ENCODE measurements at regions of chr21 and their contacts with region 1.

Region 1: DNA sequence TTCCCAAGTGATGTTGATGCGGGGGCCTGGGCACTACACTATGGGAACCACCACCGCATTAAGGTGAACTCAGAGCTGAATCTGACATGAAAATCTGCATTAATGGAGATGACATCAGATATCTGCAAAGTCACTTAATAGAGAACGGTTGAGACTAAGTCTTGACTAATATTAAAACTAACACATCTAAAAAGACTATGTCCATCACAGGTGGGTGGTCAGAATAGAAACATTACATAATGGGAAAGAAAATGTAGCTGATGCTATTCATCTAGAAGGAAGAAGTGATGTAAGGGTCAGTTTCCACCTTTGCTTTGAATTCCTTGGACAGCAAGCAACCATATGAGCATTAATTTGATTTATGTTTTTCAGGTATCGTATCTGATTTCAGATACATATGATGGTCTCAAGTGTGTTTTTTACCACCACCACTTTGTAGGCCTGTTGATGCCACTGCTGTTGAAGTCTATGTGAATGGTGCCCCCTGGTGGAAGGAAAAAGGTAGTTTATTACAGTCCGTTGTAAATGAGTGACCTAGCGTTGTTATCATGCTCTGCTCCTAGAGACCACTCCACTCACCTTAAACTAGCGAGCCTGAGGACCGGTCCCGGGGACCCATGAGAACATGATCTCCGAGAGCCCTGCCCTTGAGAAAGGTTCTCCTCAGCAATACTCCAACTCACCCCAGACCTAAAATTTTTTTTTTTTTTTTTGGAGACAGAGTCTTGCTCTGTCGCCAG is 73.5 kb downstream of the BACH1 start:
- DNase-seq: peak; percentile 36
- H3K4me3 Mint-ChIP-seq: no peak overlapping the region
- H3K27ac Mint-ChIP-seq: peak overlapping the region; percentile 44
- H3K4me1 Mint-ChIP-seq: peaks cover 25% of the 10 kb centered on the region
- H3K27me3 Mint-ChIP-seq: no peaks in the 10 kb centered on the region

Region 2: GRCh38 chr21:29078869-29079767 is 293.1 kb before region 1 on chr21:
- intact Hi-C with region 1: loop called (anchors 2 kb)
- DNase-seq: no peak
- H3K4me3 Mint-ChIP-seq: peak overlapping the region; percentile 34
- H3K27ac Mint-ChIP-seq: peak overlapping the region; percentile 83
- H3K4me1 Mint-ChIP-seq: peaks cover 45% of the 10 kb centered on the region
- H3K27me3 Mint-ChIP-seq: no peaks in the 10 kb centered on the region

Region 3: DNA sequence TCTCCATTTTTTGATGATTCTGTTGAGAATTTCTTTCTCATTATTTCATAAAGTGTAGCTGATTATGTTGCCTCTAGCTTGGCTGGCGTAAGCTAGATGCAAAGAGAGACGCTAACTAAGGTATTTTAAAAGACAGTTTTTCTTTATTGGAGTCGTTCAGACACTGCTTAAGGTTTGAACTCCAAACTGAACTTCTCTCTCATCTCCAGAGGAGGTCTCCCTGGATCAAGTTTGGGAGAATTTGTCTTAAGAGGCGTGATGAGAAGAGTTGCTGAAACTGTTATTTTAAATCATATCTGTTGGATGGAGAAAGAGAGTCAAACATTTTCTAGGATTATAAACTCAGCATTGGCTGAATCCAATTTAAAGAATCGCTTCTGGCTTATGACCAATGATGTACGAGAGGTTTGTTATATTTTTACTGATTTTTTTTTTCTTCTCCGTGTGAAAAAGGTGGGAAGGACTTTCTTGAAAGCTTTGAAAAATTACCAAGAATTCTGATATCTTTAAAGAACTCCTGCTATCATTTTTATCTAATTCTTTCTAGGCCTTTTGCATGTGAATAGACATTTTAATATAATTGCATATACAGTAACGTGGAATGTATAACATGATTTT is 207.8 kb before region 1 on chr21:
- intact Hi-C with region 1: loop called (anchors 1 kb)
- DNase-seq: no peak
- H3K4me3 Mint-ChIP-seq: no peak overlapping the region
- H3K27ac Mint-ChIP-seq: no peak overlapping the region
- H3K4me1 Mint-ChIP-seq: peaks cover 3% of the 10 kb centered on the region
- H3K27me3 Mint-ChIP-seq: peaks cover 7% of the 10 kb centered on the region

Region 4: DNA sequence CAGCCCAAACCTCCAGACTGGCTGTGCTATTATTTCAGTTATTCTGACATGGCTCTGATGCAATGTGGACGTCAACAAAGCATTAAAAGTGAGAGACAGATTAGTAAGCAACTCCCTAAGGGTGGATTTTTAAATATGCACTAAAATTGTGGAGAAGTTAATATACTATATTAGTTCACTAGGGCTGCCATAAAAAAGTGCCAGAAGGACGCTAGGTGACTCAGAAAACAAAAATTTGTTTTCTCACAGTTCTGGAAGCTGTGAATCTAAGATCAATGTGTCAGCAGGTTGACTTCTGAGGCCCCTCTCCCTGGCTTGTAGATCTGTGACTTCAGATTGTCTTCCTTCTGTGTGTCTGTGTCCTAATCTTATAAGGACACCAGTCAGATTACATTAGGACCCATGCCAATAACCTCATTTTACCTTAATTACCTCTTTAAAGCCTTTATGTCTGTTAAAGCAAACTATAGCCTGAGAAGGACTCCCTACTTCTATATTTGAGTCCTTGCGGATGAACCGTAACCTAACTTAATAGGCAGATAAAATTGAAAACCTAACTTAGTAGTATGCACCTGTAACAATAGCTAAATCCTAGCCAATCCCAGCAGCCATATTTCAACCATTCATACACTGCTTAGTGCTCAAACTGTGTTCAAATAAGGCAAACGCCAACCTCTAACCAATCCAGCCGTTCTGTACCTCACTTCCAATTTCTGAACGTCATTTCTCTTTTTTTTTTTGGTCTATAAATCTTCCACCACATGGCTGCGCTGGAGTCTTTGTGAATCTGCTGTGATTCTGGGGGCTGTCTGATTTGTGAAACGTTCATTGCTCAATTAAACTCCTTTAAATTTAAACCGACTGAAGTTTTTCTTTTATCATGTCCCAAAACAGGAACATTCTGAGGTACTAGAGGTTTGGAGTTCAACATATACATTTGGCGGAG is 139.4 kb before region 1 on chr21:
- intact Hi-C with region 1: loop called (anchors 1 kb)
- DNase-seq: no peak
- H3K4me3 Mint-ChIP-seq: no peak overlapping the region
- H3K27ac Mint-ChIP-seq: no peak overlapping the region
- H3K4me1 Mint-ChIP-seq: peaks cover 37% of the 10 kb centered on the region
- H3K27me3 Mint-ChIP-seq: peaks cover 56% of the 10 kb centered on the region

Region 5: DNA sequence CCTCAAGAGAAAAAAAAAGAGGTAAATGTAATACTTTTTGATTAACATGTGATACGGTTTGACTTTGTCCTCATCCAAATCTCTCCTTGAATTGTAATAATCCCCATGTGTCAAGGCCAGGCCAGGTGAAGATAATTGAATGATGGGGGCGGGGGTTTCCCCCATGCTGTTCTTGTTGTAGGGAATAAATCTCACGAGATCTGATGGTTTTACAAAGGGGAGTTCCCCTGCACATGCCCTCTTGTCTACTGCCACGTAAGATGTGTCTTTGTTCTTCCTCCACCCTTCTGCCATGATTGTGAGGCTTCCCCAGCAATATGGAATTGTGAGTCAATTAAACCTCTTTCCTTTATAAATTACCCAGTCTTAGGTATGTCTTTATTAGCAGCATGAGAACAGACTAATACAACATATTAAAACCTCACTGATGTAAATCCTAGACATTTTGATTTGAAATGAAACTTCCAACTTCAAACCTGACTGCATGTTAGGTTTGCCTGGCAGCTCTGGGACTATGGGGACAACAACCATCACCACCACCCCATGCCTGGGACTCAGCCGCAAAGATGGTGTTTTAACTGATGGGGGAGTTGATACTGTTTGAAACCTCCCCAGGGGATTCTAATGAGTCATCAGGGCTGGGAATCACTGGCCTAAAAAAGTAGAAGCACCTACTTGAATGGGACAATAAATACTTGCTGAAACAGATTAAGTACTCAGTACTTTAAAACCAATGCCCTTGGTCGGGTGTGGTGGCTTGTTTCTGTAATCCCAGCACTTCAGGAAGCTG is 106.3 kb before region 1 on chr21:
- intact Hi-C with region 1: no loop called
- DNase-seq: no peak
- H3K4me3 Mint-ChIP-seq: no peak overlapping the region
- H3K27ac Mint-ChIP-seq: no peak overlapping the region
- H3K4me1 Mint-ChIP-seq: peaks cover 5% of the 10 kb centered on the region
- H3K27me3 Mint-ChIP-seq: peaks cover 22% of the 10 kb centered on the region

Region 6: DNA sequence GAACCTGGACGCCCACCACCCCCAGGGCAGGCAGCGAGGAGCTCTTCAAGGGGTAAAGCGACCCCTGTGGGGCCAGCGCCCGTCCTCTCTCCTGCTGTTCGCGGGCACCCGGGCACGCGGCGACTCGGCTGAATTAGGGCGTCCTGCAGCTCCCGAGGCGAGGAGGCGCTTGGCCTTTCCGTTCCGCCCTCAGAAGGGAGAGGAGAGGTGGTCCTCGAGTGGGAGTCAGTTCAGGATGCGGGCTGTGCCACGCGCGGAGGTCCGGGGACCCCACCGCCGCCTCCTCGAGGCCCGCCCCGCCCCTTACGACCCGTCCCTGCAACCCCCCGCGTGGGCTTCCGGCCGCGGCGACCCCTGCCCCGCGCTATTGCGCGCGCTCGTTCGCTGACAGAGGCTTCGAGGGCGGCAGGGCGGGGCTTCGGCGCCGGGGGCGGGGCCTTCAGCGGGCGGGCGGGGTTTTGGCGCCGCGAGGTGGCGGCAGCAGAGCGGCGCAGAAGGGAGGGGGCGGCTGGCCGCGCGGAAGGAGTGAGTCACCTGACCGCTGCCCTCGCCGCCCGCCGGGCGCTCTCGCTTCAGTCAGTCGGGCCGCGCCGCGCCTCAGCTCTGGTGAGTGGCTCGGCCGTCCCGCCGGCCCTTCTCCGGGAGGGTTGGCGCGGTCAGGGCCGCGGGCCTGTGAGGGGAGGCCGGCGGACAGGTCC is 73.7 kb before region 1 on chr21 and contains the start of gene BACH1:
- intact Hi-C with region 1: loop called (anchors 1 kb)
- DNase-seq: peak; percentile 78
- H3K4me3 Mint-ChIP-seq: peak within 1 kb of the TSS; percentile 93
- H3K27ac Mint-ChIP-seq: peak within 1 kb of the TSS; percentile 91
- H3K4me1 Mint-ChIP-seq: peaks cover 43% of the 10 kb centered on the region
- H3K27me3 Mint-ChIP-seq: peaks cover 11% of the 10 kb centered on the region
- total RNA-seq, gene BACH1: 35.2 and 37.9 TPM in 2 replicates

Region 7: GRCh38 chr21:29546071-29546470 is 173.8 kb after region 1 on chr21:
- intact Hi-C with region 1: no loop called
- DNase-seq: no peak
- H3K4me3 Mint-ChIP-seq: no peak overlapping the region
- H3K27ac Mint-ChIP-seq: no peak overlapping the region
- H3K4me1 Mint-ChIP-seq: no peaks in the 10 kb centered on the region
- H3K27me3 Mint-ChIP-seq: no peaks in the 10 kb centered on the region

Region 8: GRCh38 chr21:29849735-29850176 is 477.5 kb after region 1 on chr21:
- intact Hi-C with region 1: loop called (anchors 5 kb)
- DNase-seq: peak; percentile 18
- H3K4me3 Mint-ChIP-seq: no peak overlapping the region
- H3K27ac Mint-ChIP-seq: no peak overlapping the region
- H3K4me1 Mint-ChIP-seq: no peaks in the 10 kb centered on the region
- H3K27me3 Mint-ChIP-seq: peaks cover 3% of the 10 kb centered on the region